ENCODE measurements at regions of chr10 and their contacts with region 1.

Region 1: DNA sequence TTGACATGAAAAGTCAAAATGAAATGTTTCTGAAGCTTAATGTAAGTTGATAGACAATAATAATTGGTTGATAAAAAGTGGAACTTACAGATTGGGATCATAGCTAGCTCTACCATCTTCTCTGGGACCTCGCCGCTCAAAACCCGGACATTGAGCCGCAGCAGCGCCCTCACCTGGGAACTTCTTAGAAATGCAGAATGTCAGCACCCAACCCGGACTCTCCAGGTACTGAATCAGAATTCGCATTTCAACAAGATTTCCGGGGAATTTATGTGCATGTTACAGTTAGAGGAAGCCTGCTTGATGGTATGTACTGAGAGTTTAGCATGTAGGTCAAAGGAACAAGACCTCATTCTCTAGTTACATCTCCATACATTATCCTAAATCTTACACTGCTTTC is 36.7 kb upstream of the ABLIM1 start:
- DNase-seq: no peak
- ATAC-seq: no peak
- H3K4me3 ChIP-seq: no peak overlapping the region
- H3K27ac ChIP-seq: peak overlapping the region in 5 of 10 donors; percentile 29 to 84 (median 77)
- H3K4me1 ChIP-seq: peaks cover 0 to 85% (median 49%) of the 10 kb centered on the region in 9 donors
- H3K27me3 ChIP-seq: no peaks in the 10 kb centered on the region
- CTCF ChIP-seq: peak in 7 of 9 donors; percentile 32 to 58 (median 48)

Region 2: GRCh38 chr10:114631666-114632417 is 62.9 kb before region 1 on chr10:
- intact Hi-C with region 1: loop called in 6 of 10 experiments (anchors 5 to 10 kb)
- DNase-seq: peak; percentile 57 to 58
- ATAC-seq: peak; percentile 58 to 69 (median 61)
- H3K4me3 ChIP-seq: peak overlapping the region; percentile 45 to 80 (median 62)
- H3K27ac ChIP-seq: peak overlapping the region; percentile 81 to 95 (median 86)
- H3K4me1 ChIP-seq: peaks cover 8 to 93% (median 62%) of the 10 kb centered on the region in 9 donors
- H3K27me3 ChIP-seq: peaks cover 0 to 37% (median 0%) of the 10 kb centered on the region in 7 donors
- CTCF ChIP-seq: peak in 1 of 9 donors; percentile 13

Region 3: DNA sequence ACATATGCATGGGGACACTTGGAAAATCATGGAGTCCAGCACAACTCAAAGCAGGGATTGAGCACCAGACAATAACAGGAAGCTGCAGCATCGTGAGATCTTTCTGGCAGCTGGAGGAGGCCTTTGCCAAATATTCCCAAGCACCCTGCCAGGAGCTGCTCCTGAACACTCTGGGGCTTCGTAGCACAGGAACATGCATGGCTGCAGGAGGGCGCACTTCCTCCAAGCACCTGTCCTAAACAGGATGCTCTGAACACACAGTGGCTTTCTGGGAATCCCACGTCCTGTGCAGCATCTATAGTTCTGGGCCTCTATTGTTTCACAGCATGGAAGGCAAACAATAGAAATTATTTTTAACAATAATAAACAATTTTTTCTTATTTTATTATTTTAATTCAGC is 40.8 kb before region 1 on chr10:
- intact Hi-C with region 1: loop called in 2 of 10 experiments (anchors 5 kb)
- DNase-seq: peak; percentile 45 to 69
- ATAC-seq: peak; percentile 62 to 81 (median 74)
- H3K4me3 ChIP-seq: no peak overlapping the region
- H3K27ac ChIP-seq: peak overlapping the region; percentile 8 to 92 (median 78)
- H3K4me1 ChIP-seq: peaks cover 41 to 99% (median 90%) of the 10 kb centered on the region in 9 donors
- H3K27me3 ChIP-seq: no peaks in the 10 kb centered on the region
- CTCF ChIP-seq: peak in 2 of 9 donors; percentile 34 to 43

Region 4: DNA sequence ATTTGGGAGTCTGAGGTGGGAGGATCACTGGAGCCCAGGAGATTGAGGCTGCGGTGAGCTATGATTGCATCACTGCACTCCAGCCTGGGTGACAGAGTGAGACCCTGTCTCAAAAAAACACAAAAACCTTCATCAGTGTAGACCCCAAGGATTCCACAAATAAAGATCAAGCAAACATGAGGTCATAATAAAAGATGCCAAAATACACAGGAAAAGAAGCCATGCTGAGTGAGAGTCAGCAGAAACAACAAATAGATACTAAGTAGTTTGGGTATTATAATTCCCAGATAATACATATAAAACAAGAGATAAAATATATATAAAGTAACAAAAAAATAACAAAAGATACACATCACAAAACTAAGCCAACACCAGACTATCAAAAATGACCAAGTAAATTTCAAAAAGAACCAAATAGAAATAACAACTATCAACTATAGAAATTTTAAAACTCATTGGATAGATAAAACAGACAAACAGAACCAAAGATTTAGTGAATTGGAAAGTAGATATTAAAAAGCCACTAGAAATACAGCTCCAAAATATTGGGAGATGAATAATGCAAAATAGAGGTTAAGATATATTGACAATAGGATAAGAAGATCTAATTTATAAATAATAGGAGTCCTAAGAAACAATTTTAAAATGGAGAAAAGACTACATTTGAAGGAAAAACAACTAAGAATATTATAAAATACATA is 77.9 kb after region 1 on chr10:
- intact Hi-C with region 1: loop called in 1 of 10 experiments (anchors 5 kb)
- DNase-seq: no peak
- ATAC-seq: no peak
- H3K4me3 ChIP-seq: no peak overlapping the region
- H3K27ac ChIP-seq: no peak overlapping the region
- H3K4me1 ChIP-seq: peaks cover 0 to 7% (median 4%) of the 10 kb centered on the region in 9 donors
- H3K27me3 ChIP-seq: peaks cover 0 to 12% (median 0%) of the 10 kb centered on the region in 7 donors
- CTCF ChIP-seq: no peak